GM10248 (cell line): ENCODE measurements at regions of chr14 and their contacts with region 1.

Region 1: GRCh38 chr14:50321009-50321660 is 9.0 kb downstream of the DMAC2L start:
- DNase-seq: peak; percentile 68
- CTCF ChIP-seq: peak; percentile 87

Region 2: DNA sequence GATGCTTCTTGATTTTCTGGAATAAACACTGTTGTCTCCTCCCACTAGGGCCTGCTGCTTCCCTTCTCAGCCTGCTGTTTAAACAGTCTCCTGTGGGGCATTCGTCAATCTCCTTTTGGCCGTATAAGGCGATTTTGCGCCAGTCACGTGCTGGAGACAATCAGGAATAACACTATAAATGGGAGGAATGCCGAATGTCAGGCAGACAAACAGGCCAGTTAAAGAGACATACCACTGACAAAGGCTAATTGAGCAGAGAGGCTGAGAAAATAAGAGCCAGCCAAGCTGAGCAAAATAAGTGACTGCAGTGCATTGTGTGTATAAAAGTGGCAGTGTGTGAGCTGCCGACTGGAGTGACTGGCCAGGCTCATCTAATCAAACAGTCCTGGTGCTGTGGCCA is 14.3 kb after region 1 on chr14:
- CTCF ChIA-PET with region 1: interaction called, 23 read pairs
- POLR2A ChIA-PET with region 1: interaction called, 3 read pairs
- DNase-seq: no peak
- CTCF ChIP-seq: no peak

Region 3: GRCh38 chr14:50344116-50344775 is 23.1 kb after region 1 on chr14:
- CTCF ChIA-PET with region 1: interaction called, 12 read pairs
- POLR2A ChIA-PET with region 1: interaction called, 3 read pairs
- DNase-seq: peak; percentile 64
- CTCF ChIP-seq: no peak

Region 4: GRCh38 chr14:50520947-50521815 is 200.0 kb after region 1 on chr14:
- CTCF ChIA-PET with region 1: interaction called, 14 read pairs
- POLR2A ChIA-PET with region 1: no interaction called
- DNase-seq: peak; percentile 40
- CTCF ChIP-seq: no peak

Region 5: GRCh38 chr14:50532502-50533240 is 211.5 kb after region 1 on chr14 and contains the start of gene MAP4K5:
- CTCF ChIA-PET with region 1: interaction called, 24 read pairs
- POLR2A ChIA-PET with region 1: no interaction called
- DNase-seq: peak; percentile 94
- CTCF ChIP-seq: peak; percentile 92